Cardiac septum (tissue), 1 donor: ENCODE measurements at regions of chr19 and their contacts with region 1.

Region 1: DNA sequence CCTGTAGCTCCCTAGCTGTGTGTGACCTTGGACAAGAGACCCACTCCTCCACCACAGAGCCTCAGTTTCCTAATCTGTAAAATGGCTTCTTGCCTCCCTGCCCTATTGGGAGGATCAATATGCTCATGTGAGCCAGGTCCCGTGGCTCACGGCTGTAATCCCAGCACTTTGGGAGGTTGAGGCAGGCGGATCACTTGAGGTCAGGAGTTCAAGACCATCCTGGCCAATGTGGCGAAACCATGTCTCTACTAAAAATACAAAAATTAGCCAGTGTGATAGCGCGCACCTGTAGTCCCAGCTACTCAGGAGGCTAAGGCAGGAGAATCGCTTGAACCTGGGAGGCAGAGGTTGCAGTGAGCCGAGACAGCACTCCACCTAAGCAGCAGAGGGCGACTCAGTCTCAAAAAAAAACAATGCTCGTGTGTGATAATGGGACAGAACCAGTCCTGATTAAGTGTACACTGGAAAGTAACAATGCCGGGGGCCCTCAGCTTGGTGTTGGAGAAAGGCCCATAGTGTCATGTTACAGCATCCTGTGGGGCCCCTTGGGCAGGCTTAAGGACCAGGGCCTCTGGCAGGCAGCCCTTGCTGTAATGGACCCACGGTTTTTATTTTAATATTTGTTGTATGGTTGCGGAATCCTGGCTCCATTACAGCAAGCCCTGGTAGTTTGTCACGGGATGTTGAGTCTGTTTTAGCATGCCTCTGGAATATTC is 6.8 kb downstream of the RPS11 start:
- DNase-seq: no peak

Region 2: GRCh38 chr19:49451430-49452181 is 51.4 kb before region 1 on chr19 and contains the start of gene PIH1D1:
- intact Hi-C with region 1: no loop called
- DNase-seq: peak; percentile 95
- total RNA-seq, gene PIH1D1: 24.2 TPM

Region 3: GRCh38 chr19:49546825-49547565 is 44.0 kb after region 1 on chr19:
- intact Hi-C with region 1: loop called (anchors 2 kb)
- DNase-seq: no peak

Region 4: GRCh38 chr19:49570138-49570856 is 67.3 kb after region 1 on chr19:
- intact Hi-C with region 1: loop called (anchors 2 kb)
- DNase-seq: no peak